GM18951 (cell line): ENCODE measurements at regions of chr2 and their contacts with region 1.

Region 1: DNA sequence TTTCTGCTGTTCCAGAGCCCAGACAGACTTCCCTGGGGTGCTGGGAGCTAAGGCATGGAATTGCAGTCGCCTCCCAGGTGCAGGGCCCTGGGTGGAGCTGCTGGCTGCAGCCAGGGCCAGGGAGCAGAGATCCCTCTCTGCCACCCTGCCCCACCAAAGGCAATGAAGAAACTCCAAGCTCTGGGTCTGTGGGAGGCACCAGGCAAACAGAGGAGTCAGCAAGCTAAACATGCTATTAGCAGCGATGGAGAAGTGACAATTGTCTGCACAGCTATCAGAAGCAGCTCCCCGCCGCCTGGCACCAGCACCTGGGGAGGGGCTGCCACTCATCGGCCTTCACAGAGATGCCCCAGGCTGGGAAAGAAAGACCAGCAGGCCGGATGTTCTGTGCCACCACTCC is 28.0 kb upstream of the COX5B start:
- POLR2A ChIP-seq: no peak

Region 2: GRCh38 chr2:95757988-95758387 is 1859.9 kb before region 1 on chr2:
- in situ Hi-C with region 1: loop called (anchors 10 kb)
- POLR2A ChIP-seq: no peak

Region 3: GRCh38 chr2:96065381-96065930 is 1552.5 kb before region 1 on chr2:
- in situ Hi-C with region 1: loop called (anchors 10 kb)
- POLR2A ChIP-seq: no peak